K562 (cell line): ENCODE measurements at regions of chr2 and their contacts with region 1.

Region 1: GRCh38 chr2:178414266-178415247 is 36.4 kb downstream of the PRKRA start:
- DNase-seq: peak; percentile 88 to 98 (median 92)
- ATAC-seq: peak; percentile 92
- H3K4me3 ChIP-seq: peak overlapping the region; percentile 46
- H3K27ac ChIP-seq: peak overlapping the region; percentile 78
- H3K4me1 ChIP-seq: peaks cover 8 to 11% of the 10 kb centered on the region in 2 experiments; a peak in 4 of 5 replicates
- H3K27me3 ChIP-seq: no peaks in the 10 kb centered on the region
- CTCF ChIP-seq: peak; percentile 97 to 100 (median 99)
- EP300 ChIP-seq: peak; percentile 79
- POLR2A ChIP-seq: peak; percentile 62
- RAD21 ChIP-seq: peak; percentile 96 to 97

Region 2: GRCh38 chr2:177983183-177983788 is 431.3 kb before region 1 on chr2:
- CTCF ChIA-PET with region 1: interaction called, 4 read pairs
- POLR2A ChIA-PET with region 1: no interaction called
- in situ Hi-C with region 1: no loop called
- intact Hi-C with region 1: loop called (anchors 5 kb)
- DNase-seq: peak; percentile 68 to 76 (median 71)
- ATAC-seq: peak; percentile 96
- H3K4me3 ChIP-seq: no peak overlapping the region
- H3K27ac ChIP-seq: no peak overlapping the region
- H3K4me1 ChIP-seq: no peaks in the 10 kb centered on the region
- H3K27me3 ChIP-seq: no peaks in the 10 kb centered on the region
- CTCF ChIP-seq: peak; percentile 80 to 90 (median 89)
- EP300 ChIP-seq: no peak
- POLR2A ChIP-seq: no peak
- RAD21 ChIP-seq: peak; percentile 87 to 88

Region 3: DNA sequence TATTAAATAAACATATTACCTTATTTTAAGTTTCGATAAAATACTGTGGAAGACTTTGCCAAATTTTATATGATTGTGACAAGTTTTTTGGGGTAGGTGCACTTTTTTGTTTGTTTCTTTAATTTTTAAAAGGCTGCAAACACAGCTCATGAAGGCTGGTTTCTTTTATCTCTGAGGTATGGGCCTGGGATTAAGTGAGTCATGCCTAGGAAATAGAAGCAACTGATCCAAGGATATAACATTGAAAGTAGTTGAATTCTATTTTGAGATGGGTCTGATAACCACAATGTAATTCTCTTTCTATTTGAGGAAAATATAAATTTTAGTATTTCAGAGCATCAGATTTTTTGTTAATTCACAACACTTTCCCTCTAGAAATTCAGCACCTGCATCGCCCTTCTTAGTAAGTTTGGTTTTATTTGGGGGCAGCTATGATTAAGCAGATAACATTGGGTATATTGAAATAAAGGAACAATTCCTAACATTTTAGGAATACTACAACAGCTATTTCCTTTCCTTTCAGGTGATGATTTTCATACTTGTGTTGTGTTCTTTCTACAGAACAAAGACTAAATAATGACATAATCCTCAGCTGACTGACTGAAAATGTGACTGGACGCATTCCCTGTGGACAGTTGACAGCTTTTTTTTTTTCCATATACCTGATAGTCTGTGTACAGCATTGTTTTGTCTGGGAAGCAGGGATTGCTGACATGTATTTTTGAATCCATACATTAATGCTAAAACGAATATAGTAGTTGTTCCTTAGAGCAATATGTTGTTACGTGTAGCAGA is 285.5 kb before region 1 on chr2:
- CTCF ChIA-PET with region 1: interaction called, 5 read pairs
- POLR2A ChIA-PET with region 1: interaction called, 3 read pairs
- in situ Hi-C with region 1: no loop called
- intact Hi-C with region 1: loop called (anchors 1 kb)
- DNase-seq: no peak
- ATAC-seq: no peak
- H3K4me3 ChIP-seq: no peak overlapping the region
- H3K27ac ChIP-seq: no peak overlapping the region
- H3K4me1 ChIP-seq: 0 out of 5 replicates have a peak, but pooled peaks cover 0 to 2% of the 10 kb centered on the region in 2 experiments
- H3K27me3 ChIP-seq: no peaks in the 10 kb centered on the region
- CTCF ChIP-seq: no peak
- EP300 ChIP-seq: no peak
- POLR2A ChIP-seq: no peak
- RAD21 ChIP-seq: no peak

Region 4: GRCh38 chr2:178306352-178307073 is 108.0 kb before region 1 on chr2:
- CTCF ChIA-PET with region 1: interaction called, 9 read pairs
- POLR2A ChIA-PET with region 1: no interaction called
- in situ Hi-C with region 1: no loop called
- intact Hi-C with region 1: loop called (anchors 1 kb)
- DNase-seq: peak; percentile 33 to 83 (median 56)
- ATAC-seq: peak; percentile 99
- H3K4me3 ChIP-seq: no peak overlapping the region
- H3K27ac ChIP-seq: no peak overlapping the region
- H3K4me1 ChIP-seq: peaks cover 0 to 6% of the 10 kb centered on the region in 2 experiments; a peak in 2 of 5 replicates
- H3K27me3 ChIP-seq: no peaks in the 10 kb centered on the region; a peak in 1 of 5 replicates
- CTCF ChIP-seq: peak; percentile 77 to 90 (median 86)
- EP300 ChIP-seq: no peak
- POLR2A ChIP-seq: no peak
- RAD21 ChIP-seq: peak; percentile 78 to 87

Region 5: DNA sequence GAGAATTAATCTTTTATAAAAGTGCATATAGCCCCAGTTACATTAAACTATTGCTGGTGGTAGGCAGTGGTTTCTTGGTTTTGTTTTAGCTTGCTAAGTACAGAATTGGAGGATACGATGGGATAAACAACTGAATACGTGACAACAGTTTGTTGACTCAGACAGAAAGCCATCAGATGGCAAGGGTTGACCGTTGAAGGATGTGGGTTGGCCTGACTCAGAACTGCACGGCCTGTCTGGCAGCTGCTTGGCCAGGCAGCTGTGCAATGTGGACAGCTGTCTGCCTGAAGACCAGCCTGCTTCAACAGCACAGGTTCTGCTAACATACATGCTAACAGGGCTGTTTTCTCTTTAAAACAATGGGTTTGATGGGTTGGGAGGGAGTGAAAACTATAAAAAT is 10.2 kb before region 1 on chr2:
- CTCF ChIA-PET with region 1: no interaction called
- POLR2A ChIA-PET with region 1: interaction called, 41 read pairs
- in situ Hi-C with region 1: no loop called
- intact Hi-C with region 1: loop called (anchors 1 kb)
- DNase-seq: peak in 2 of 4 experiments; percentile 23 to 62
- ATAC-seq: peak; percentile 48
- H3K4me3 ChIP-seq: no peak overlapping the region
- H3K27ac ChIP-seq: no peak overlapping the region
- H3K4me1 ChIP-seq: peaks cover 3 to 30% of the 10 kb centered on the region in 2 experiments; a peak in 4 of 5 replicates
- H3K27me3 ChIP-seq: no peaks in the 10 kb centered on the region
- CTCF ChIP-seq: no peak
- EP300 ChIP-seq: peak; percentile 46; the same call in 1 of the 2 replicates
- POLR2A ChIP-seq: no peak
- RAD21 ChIP-seq: no peak

Region 6: DNA sequence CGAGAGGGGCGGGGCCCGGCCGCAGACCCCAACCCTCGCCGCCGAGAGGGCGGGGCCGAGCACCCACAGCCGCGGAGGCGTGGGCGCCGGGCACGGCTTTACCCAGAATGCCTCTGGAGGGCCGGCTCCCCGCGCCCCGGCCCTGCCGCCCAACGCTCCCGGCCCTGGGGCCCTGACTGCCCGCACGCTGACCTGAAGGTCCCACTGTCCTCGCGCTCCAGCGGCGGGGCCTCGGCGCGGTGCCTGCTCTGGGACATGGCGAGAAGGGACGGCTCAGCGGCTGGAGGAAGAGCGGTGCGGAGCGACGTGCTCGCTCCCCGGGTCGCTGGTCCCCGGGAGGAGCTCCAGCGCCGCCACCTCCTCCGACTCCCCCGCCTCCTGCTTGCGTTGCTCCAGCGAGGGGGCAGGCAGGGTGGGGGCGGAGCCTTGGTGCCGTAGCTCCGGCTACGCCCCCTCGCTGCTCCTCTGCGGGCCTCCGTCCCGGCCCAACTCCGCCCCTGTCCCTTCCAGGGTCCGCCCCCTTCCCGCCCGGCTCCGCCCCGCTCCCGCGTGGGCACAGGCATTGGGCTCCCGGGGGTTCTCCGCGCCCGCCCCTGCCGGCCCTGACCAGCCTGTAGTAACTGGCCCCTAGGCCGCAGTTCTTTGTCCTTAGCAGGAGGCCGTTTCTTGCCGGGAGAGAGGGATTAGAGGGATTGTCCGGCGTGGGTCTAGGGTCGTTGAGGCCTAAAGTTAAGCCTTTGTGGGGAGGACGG is 36.4 kb after region 1 on chr2 and contains the starts of genes PJVK and PRKRA:
- CTCF ChIA-PET with region 1: no interaction called
- POLR2A ChIA-PET with region 1: interaction called, 23 read pairs
- in situ Hi-C with region 1: no loop called
- intact Hi-C with region 1: loop called (anchors 2 kb)
- DNase-seq: peak; percentile 98 to 99 (median 99)
- ATAC-seq: peak; percentile 97
- H3K4me3 ChIP-seq: peak within 1 kb of the TSS; percentile 90
- H3K27ac ChIP-seq: peak within 1 kb of the TSS; percentile 96
- H3K4me1 ChIP-seq: peaks cover 14 to 19% of the 10 kb centered on the region in 2 experiments; a peak in 4 of 5 replicates
- H3K27me3 ChIP-seq: no peaks in the 10 kb centered on the region
- CTCF ChIP-seq: peak in 2 of 3 experiments; percentile 9 to 14; a peak in 1 of 6 replicates
- EP300 ChIP-seq: peak; percentile 11; the same call in 1 of the 2 replicates
- POLR2A ChIP-seq: peak; percentile 99
- RAD21 ChIP-seq: no peak
- polyA plus RNA-seq, gene PJVK: 0.11 to 0.24 TPM
- polyA plus RNA-seq, gene PRKRA: 14.1 to 20.4 TPM